ENCODE measurements at regions of chr15 and their contacts with region 1.

Region 1: GRCh38 chr15:39177561-39177960 is 403.3 kb upstream of the THBS1 start:
- DNase-seq: no peak
- H3K4me3 ChIP-seq: no peak overlapping the region
- H3K27ac ChIP-seq: no peak overlapping the region
- H3K4me1 ChIP-seq: peaks cover 0 to 33% (median 18%) of the 10 kb centered on the region in 4 donors
- H3K27me3 ChIP-seq: no peaks in the 10 kb centered on the region
- CTCF ChIP-seq: no peak
- EP300 ChIP-seq: no peak
- POLR2A ChIP-seq: no peak

Region 2: GRCh38 chr15:38961931-38962330 is 215.6 kb before region 1 on chr15:
- intact Hi-C with region 1: no loop called
- DNase-seq: peak in 1 of 2 donors; percentile 45
- H3K4me3 ChIP-seq: no peak overlapping the region
- H3K27ac ChIP-seq: no peak overlapping the region
- H3K4me1 ChIP-seq: no peaks in the 10 kb centered on the region
- H3K27me3 ChIP-seq: no peaks in the 10 kb centered on the region
- CTCF ChIP-seq: no peak
- EP300 ChIP-seq: no peak
- POLR2A ChIP-seq: no peak

Region 3: DNA sequence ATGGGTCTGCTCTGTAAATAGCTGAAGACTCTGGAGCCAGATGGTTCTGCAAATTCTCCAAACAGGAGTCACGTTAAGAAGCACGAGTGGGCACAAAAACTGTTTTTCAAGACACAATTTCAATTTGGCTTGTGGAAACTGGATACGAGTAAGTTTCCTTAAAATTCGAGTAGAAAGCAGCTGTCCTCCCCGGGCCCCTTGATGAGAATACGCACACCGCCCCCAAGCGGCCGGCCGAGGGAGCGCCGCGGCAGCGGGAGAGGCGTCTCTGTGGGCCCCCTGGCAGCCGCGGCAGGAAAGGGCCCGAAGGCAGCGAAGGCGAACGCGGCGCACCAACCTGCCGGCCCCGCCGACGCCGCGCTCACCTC is 402.5 kb after region 1 on chr15:
- intact Hi-C with region 1: loop called (anchors 5 kb)
- DNase-seq: peak; percentile 93 to 97
- H3K4me3 ChIP-seq: peak overlapping the region; percentile 54 to 76 (median 63)
- H3K27ac ChIP-seq: peak overlapping the region; percentile 77 to 96 (median 94)
- H3K4me1 ChIP-seq: peaks cover 15 to 67% (median 49%) of the 10 kb centered on the region in 4 donors
- H3K27me3 ChIP-seq: peaks cover 0 to 14% (median 4%) of the 10 kb centered on the region in 3 donors
- CTCF ChIP-seq: peak in 5 of 7 experiments; percentile 70 to 99 (median 97)
- EP300 ChIP-seq: no peak
- POLR2A ChIP-seq: no peak